Right cardiac atrium (tissue), 5 donors: ENCODE measurements at regions of chr6 and their contacts with region 1.

Region 1: GRCh38 chr6:24283043-24283985 is 74.5 kb downstream of the DCDC2 start:
- DNase-seq: peak; percentile 62 to 85 (median 81)
- ATAC-seq: peak; percentile 92 to 93
- H3K4me3 ChIP-seq: peak overlapping the region; percentile 22
- H3K27ac ChIP-seq: no peak overlapping the region
- H3K4me1 ChIP-seq: no peaks in the 10 kb centered on the region
- H3K27me3 ChIP-seq: no peaks in the 10 kb centered on the region

Region 2: DNA sequence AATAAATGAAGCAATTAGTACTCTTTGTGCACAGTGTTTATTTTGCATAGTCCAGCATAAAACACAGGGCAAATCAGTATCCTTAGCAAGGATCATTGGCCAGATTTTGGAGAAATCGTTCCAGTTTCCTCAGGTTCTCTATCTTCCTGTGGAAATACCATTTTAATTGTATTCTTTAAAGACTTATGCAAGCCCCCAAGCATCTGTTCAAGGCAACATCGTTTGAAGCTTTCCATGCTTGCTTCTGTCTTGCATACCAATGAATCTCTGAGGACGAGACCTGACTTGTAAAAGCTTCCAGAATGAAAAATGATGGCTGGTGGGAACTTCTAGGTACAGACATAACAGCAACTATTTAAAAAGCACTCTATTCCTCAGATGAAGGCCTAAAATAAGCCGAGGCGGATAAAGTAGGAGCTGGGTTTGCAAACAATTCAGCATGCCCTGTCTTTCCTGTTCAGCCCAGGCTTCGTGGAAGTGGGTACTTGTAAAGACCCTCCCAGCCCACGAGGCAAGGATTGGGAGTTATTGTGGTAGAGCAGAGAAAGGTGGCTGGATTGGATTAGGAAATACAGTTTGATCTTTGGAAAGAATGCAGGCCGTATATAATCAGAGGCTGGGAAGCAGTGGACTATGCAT is 135.7 kb before region 1 on chr6:
- intact Hi-C with region 1: no loop called
- DNase-seq: no peak
- ATAC-seq: no peak
- H3K4me3 ChIP-seq: no peak overlapping the region
- H3K27ac ChIP-seq: no peak overlapping the region
- H3K4me1 ChIP-seq: no peaks in the 10 kb centered on the region
- H3K27me3 ChIP-seq: no peaks in the 10 kb centered on the region

Region 3: DNA sequence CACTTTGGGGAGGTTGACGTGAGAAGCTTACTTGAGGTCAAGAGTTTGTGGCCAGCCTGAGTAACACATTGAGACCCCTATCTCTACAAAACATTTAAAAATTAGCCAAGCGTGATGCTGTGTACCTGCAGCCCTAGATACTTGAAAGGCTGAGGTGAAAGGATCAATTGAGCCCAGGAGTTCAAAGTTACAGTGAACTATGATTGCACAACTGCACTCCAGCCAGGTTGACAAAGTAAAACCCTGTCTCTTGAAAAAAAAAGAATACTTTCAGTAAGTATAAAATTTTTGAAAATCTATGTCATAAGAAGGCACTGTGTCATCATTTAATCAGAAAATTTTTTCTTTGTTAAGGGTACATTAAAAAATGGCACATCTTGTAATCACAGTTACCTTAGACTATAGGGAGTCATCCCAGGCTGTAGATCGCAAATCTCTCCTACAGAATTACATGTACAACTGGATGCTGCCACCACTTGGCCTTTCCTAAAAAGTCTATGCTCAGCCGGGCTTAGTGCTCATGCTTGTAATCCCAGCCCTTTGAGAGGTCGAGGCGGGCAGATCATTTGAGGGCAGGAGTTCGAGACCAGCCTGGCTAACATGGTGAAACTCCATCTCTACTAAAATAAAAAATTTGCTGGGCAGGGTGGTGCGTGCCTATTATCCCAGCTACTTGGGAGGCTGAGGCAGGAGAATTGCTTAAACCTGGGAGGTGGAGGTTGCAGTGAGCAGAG is 102.4 kb after region 1 on chr6:
- intact Hi-C with region 1: loop called (anchors 5 to 10 kb)
- DNase-seq: no peak
- ATAC-seq: no peak
- H3K4me3 ChIP-seq: no peak overlapping the region
- H3K27ac ChIP-seq: no peak overlapping the region
- H3K4me1 ChIP-seq: no peaks in the 10 kb centered on the region
- H3K27me3 ChIP-seq: no peaks in the 10 kb centered on the region

Region 4: DNA sequence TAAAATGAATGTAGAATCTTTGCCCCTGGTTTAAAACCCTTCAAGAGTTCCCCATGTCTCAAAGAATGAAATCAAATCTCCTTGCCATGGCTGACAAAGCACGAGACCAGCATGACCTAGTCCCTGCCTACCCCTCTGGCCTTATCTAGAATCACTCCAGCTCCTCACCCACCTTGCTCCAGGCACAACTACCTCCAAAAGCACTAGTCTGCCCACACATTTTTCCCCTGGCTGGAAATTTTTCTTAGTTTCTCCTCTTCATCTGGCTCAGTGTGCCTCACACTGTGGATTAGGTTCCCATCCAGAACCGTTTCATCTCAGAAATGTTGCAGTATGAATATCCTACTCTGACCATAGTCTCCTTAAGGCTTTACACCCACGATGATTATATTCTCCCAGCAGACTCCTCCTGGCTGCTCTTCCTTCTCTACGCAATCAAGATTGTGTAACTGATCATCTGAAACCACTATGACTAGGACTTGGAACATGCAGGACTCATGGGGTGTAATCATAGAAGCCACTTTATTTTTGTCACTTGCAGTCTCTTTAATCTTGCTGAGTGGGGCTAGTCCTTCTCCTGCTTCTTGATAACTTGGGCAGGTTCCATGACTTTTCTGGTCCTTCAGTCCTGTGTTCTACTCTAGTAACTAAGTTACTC is 111.6 kb after region 1 on chr6:
- intact Hi-C with region 1: loop called in 1 of 4 experiments (anchors 5 kb)
- DNase-seq: no peak
- ATAC-seq: no peak
- H3K4me3 ChIP-seq: no peak overlapping the region
- H3K27ac ChIP-seq: no peak overlapping the region
- H3K4me1 ChIP-seq: no peaks in the 10 kb centered on the region
- H3K27me3 ChIP-seq: no peaks in the 10 kb centered on the region

Region 5: DNA sequence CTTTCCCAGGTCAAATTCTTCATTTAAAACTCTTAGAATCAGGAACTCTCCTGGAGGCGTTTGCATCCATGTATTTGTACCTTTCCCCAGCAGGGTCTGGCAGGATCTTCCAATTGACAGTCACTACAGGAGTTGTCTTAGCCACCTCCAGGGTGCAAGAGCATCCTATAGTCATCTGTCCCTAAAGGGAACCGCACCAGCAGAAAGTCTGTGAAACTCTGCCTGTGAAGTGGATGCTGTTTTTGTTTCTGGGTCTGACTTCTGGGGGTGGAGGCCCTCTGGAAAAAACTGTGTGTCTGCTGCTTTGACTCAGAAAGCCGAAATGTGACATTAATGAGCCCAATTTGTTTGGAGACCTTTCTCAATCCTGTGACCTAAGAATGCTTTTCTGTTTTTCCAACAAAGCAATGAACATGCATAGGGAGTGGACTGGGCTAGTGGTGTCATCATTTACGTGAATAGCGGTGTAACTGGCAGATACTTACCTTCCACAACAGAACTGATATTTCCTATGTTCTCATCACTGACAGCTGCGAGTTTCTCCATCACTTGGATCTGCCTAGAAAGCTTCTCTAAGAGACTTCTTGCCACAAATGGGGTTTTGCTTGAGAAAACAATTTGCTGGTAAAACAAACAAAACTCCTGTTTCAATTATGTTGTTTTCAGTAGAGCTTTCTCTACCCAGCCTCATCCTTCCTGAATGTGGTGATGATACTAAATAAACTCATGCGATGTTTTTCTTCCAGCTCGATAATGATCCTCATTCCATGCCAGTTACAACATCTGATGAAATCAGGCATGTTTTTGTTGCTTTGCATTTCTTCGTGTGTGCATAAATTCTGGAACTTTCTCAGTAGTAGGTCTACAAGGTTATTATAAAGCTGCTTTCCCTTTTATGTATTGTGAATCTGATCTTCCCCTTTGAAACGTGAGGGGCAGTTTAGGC is 548.7 kb after region 1 on chr6:
- intact Hi-C with region 1: no loop called
- DNase-seq: no peak
- ATAC-seq: no peak
- H3K4me3 ChIP-seq: no peak overlapping the region
- H3K27ac ChIP-seq: no peak overlapping the region
- H3K4me1 ChIP-seq: no peaks in the 10 kb centered on the region
- H3K27me3 ChIP-seq: no peaks in the 10 kb centered on the region